ENCODE measurements at regions of chr9 and their contacts with region 1.

Region 1: GRCh38 chr9:109469646-109470358 is 28.3 kb downstream of the PTPN3 start:
- DNase-seq: peak; percentile 75
- ATAC-seq: peak; percentile 98
- H3K4me3 Mint-ChIP-seq: no peak overlapping the region
- H3K27ac Mint-ChIP-seq: no peak overlapping the region
- H3K4me1 Mint-ChIP-seq: peaks cover 3% of the 10 kb centered on the region; the same call in 1 of the 2 replicates
- H3K27me3 Mint-ChIP-seq: no peaks in the 10 kb centered on the region
- CTCF ChIP-seq: peak; percentile 69

Region 2: DNA sequence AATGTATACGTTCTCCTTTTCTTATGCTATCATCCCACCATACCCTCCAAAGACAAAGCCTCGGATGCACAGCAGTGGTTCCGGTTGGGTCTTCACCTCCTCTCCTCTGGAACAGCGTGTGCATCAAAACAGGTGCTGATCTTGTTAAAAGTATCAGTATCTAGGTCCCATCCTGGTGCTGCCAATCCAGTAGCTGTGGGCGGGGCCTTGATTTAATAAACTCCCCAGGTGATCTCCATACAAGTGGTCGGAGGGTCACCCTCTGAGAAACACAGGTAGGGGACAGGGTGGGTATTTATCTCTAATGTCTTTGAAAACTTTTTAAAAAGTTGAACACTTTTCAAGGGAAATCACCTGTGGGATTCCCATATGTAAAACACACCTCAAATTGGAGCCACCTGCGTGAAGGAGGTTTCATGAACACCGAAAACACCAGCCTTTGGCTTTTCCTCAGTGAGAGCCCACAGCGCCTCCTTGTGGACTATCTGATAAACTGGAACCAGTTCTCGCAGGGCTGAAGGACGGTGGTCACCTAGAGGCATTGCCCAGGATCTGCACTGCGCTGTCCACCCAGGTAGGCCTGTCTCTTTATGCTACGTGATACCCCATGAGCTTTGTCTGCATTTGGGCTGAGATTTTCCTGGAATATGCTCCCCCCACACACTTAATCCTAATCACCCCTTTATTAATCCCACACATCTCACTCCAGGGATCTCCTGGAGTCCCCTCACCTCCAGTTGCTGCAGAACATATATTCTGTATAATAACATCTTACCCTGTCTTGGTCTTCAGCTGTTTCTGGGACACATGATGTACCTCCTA is 68.4 kb before region 1 on chr9:
- CTCF ChIA-PET with region 1: interaction called, 11 read pairs
- POLR2A ChIA-PET with region 1: no interaction called
- DNase-seq: peak; percentile 86
- ATAC-seq: peak; percentile 96
- H3K4me3 Mint-ChIP-seq: no peak overlapping the region
- H3K27ac Mint-ChIP-seq: no peak overlapping the region
- H3K4me1 Mint-ChIP-seq: peaks cover 12% of the 10 kb centered on the region
- H3K27me3 Mint-ChIP-seq: no peaks in the 10 kb centered on the region
- CTCF ChIP-seq: peak; percentile 89

Region 3: DNA sequence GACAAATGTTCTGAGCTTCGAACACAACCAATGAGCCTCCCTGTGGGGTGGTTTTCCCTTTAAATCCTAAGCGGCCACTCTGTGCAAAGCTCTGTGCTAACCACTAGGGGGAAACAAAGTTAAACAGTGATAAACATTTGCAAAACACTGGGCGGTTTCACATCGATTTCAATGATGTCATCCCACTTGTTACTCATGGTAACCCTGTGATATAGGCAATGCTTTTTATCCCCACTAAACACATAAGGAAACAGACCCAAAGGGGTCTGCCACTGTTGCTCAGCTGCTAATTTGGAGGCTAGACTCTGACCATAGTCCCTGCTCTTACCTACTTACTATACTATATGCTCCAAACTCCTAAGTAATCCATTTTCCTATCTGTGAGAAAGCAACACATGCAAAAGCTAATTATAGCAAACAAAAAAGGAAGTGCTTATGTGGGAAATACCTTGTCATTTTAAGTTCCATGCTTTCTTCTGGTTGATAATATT is 29.0 kb before region 1 on chr9:
- CTCF ChIA-PET with region 1: interaction called, 23 read pairs
- POLR2A ChIA-PET with region 1: no interaction called
- DNase-seq: peak; percentile 58
- ATAC-seq: peak; percentile 97
- H3K4me3 Mint-ChIP-seq: no peak overlapping the region
- H3K27ac Mint-ChIP-seq: peak overlapping the region; percentile 77
- H3K4me1 Mint-ChIP-seq: peaks cover 9% of the 10 kb centered on the region
- H3K27me3 Mint-ChIP-seq: peaks cover 2% of the 10 kb centered on the region; the same call in 1 of the 2 replicates
- CTCF ChIP-seq: peak; percentile 61

Region 4: DNA sequence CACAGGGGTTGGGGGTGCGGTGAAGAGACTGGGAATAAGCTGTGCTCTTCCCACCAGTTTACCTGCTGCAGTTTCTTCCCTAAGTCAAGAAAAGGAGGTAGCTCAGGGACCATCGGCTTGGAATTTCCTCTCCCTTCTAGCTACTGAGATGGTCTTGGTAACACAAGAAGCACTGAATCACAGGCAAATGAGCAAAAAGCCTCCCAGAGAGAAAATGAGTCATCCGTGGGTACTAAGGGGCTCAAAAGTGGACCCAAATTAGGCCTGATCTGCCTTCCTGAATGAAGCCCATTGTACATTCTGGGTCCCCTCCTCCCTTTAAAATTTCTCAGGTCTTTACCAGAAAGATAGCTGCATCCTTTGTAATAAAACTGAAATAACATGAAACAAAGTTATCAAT is 21.6 kb before region 1 on chr9:
- CTCF ChIA-PET with region 1: interaction called, 12 read pairs
- POLR2A ChIA-PET with region 1: no interaction called
- DNase-seq: no peak
- ATAC-seq: no peak
- H3K4me3 Mint-ChIP-seq: no peak overlapping the region
- H3K27ac Mint-ChIP-seq: no peak overlapping the region
- H3K4me1 Mint-ChIP-seq: peaks cover 10% of the 10 kb centered on the region
- H3K27me3 Mint-ChIP-seq: no peaks in the 10 kb centered on the region
- CTCF ChIP-seq: no peak

Region 5: DNA sequence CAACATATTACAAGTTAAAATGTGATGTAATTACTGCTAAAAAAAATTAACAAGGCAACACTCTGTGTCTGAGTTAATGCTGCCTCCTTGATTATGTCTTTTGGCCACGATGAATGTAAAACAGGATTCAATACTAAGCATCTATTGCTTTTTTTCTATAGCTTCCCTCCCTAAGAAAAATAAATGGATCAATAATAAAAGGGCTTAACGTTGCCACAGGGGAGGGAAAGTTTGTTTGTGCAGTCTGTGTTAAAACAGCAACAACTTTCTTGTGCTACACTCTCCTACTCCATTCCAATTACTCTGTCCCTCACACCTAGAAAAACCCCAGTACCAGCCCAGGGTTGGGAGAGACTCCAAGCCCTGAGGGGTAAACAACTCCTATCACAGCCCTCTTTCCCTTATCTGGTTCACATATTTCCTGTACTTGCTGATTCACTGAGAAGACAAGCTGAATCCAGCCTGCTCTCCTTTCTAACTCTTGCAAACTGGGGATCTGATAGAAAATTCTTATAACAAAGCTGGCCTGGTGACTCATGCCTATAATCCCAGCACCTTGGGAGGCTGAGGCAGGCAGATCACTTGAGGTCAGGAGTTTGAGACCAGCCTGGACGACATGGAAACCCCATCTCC is 16.5 kb before region 1 on chr9:
- CTCF ChIA-PET with region 1: interaction called, 79 read pairs
- POLR2A ChIA-PET with region 1: no interaction called
- DNase-seq: no peak
- ATAC-seq: no peak
- H3K4me3 Mint-ChIP-seq: no peak overlapping the region
- H3K27ac Mint-ChIP-seq: 0 out of 2 replicates have a peak overlapping the region, but pooled peaks have one; percentile 50
- H3K4me1 Mint-ChIP-seq: peaks cover 25% of the 10 kb centered on the region
- H3K27me3 Mint-ChIP-seq: no peaks in the 10 kb centered on the region
- CTCF ChIP-seq: no peak

Region 6: GRCh38 chr9:109482391-109482916 is 12.7 kb after region 1 on chr9:
- CTCF ChIA-PET with region 1: interaction called, 11 read pairs
- POLR2A ChIA-PET with region 1: no interaction called
- DNase-seq: no peak
- ATAC-seq: no peak; the same call in 1 of the 2 replicates
- H3K4me3 Mint-ChIP-seq: no peak overlapping the region
- H3K27ac Mint-ChIP-seq: no peak overlapping the region
- H3K4me1 Mint-ChIP-seq: peaks cover 5% of the 10 kb centered on the region; the same call in 1 of the 2 replicates
- H3K27me3 Mint-ChIP-seq: no peaks in the 10 kb centered on the region; the same call in 1 of the 2 replicates
- CTCF ChIP-seq: no peak

Region 7: DNA sequence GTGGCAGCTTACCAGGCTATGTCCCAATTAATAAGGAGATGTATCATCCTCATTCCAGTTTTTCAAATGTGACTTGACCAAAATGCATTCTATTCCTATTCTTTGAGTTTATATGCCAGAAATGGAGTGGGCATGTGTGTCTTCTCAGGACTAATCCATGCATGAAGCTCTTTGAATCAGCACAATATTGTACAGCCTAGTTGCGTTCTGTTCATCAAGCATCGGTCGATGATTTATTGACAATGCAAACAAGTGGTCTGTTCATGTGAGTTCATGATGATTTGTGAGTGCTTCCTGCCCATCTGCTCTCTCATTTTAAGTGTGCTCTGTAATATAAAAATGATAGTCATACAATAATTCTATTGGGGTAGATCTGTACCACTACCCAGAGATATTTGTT is 358.5 kb after region 1 on chr9:
- CTCF ChIA-PET with region 1: no interaction called
- POLR2A ChIA-PET with region 1: no interaction called
- DNase-seq: no peak
- ATAC-seq: no peak
- H3K4me3 Mint-ChIP-seq: no peak overlapping the region
- H3K27ac Mint-ChIP-seq: no peak overlapping the region
- H3K4me1 Mint-ChIP-seq: no peaks in the 10 kb centered on the region
- H3K27me3 Mint-ChIP-seq: no peaks in the 10 kb centered on the region
- CTCF ChIP-seq: no peak

Measured in WTC11 (cell line).